ENCODE measurements at regions of chr2 and their contacts with region 1.

Region 1: DNA sequence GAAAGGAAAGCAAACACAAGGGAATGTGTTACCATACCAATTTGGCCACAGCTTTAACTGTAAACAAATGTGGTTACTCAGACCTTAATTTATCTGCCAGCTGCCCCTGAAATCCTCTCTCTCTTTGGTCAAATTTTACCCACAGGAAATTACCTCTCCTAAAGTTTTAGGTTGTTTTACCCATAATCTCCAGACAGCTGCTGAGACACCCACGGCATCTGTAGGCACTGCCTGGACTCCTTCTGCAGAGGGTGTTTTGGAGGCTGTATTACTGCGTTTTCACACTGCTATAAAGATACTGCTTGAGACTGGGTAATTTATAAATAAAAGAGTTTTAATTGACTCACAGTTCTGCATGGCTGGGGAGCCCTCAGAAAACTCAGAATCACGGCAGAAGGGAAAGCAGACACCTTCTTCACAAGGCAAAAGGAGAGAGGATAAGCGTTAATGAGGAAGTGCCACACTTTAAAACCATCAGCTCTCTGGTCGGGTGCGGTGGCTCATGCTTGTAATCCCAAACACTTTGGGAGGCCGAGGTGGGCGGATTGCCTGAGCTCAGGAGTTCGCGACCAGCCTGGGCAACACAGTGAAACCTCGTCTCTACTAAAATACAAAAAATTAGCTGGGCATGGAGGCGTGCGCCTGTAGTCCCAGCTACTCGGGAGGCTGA is 677.5 kb upstream of the FSHR start:
- DNase-seq: no peak

Region 2: DNA sequence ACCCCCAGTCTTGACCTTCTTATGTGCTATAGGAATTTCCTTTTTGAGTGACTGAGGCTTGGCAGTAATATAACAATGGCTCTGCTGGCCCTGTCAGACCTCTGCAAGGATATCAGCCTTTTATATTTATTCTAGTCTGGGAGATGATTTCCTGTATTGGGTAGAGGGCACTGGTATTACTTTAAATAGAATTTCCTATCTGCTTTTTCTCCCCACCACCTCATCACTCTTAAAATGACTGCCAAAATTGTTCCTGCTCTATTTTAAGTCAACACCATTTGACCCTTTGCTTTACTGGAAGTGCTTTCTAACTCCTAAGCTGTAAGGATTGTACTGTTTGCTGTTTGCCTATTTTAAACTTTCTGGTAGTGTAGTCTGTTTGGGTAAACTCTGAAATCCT is 19.1 kb before region 1 on chr2:
- intact Hi-C with region 1: loop called (anchors 2 kb)
- DNase-seq: no peak

Measured in cardiac septum (tissue), 1 donor.